GM12878 (cell line): ENCODE measurements at regions of chr18 and their contacts with region 1.

Region 1: DNA sequence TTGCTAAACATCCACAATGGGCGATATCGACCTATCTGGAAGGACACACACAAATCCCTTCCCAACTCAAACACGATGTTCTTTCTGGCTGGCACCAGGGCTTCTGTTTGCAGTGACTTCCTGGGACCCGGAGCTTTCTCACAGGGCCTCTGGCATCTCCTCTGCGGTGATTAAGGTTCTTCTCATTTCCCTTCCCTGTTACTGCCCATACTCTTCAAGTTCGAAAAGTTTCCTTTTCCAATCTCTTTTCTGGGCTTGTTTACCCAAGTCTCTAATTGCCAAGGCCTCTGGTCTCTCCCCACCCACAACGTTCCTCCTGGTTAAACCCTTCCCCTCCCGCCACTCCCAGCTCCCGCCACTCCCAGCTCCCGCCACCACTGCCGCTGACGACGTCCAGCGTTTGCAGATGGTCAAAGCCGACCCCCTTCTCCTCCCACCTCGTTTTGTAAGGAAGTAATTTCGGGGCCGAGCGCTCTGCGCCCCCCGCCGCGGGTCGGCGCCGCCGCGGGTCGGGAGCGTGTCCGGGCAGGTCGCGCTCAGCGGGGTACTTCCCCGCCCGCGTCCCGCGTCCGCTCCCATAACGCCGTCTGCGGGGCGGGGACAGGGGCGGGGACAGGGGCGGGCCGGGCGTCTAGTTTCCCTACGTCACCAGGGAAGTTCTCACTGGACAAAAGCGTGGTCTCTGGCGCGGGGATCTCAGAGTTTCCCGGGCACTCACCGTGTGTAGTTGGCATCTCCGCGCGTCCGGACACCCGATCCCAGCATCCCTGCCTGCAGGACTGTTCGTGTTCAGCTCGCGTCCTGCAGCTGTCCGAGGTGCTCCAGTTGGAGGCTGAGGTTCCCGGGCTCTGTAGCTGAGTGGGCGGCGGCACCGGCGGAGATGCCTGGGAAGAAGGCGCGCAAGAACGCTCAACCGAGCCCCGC is at the start of gene PMAIP1:
- DNase-seq: no peak
- ATAC-seq: peak; percentile 73
- H3K4me3 ChIP-seq: peak within 1 kb of the TSS; percentile 84
- H3K27ac ChIP-seq: peak within 1 kb of the TSS; percentile 95
- H3K4me1 ChIP-seq: no peaks in the 10 kb centered on the region; the same call in 1 of the 2 replicates
- H3K27me3 ChIP-seq: no peaks in the 10 kb centered on the region
- CTCF ChIP-seq: no peak
- EP300 ChIP-seq: 0 out of 4 replicates have a peak, but pooled peaks of 1 of the 2 experiments have one; percentile 2
- POLR2A ChIP-seq: peak; percentile 100
- RAD21 ChIP-seq: peak; percentile 6; the same call in 1 of the 2 replicates
- polyA plus RNA-seq, gene PMAIP1: 74.0 to 119 TPM

Region 2: GRCh38 chr18:58671111-58671631 is 1228.4 kb before region 1 on chr18 and contains the start of gene MALT1:
- CTCF ChIA-PET with region 1: no interaction called
- POLR2A ChIA-PET with region 1: no interaction called
- RAD21 ChIA-PET with region 1: no interaction called
- SMC1A ChIA-PET with region 1: no interaction called
- in situ Hi-C with region 1: loop called (anchors 25 kb)
- intact Hi-C with region 1: no loop called
- DNase-seq: peak; percentile 75
- ATAC-seq: peak; percentile 78
- H3K4me3 ChIP-seq: peak within 1 kb of the TSS; percentile 95
- H3K27ac ChIP-seq: peak within 1 kb of the TSS; percentile 93
- H3K4me1 ChIP-seq: peaks cover 16% of the 10 kb centered on the region; the same call in 1 of the 2 replicates
- H3K27me3 ChIP-seq: no peaks in the 10 kb centered on the region
- CTCF ChIP-seq: no peak
- EP300 ChIP-seq: peak in 1 of 2 experiments; percentile 17; a peak in 1 of 4 replicates
- POLR2A ChIP-seq: peak; percentile 96
- RAD21 ChIP-seq: no peak; the same call in 1 of the 2 replicates
- polyA plus RNA-seq, gene MALT1: 17.6 to 32.5 TPM

Region 3: GRCh38 chr18:59846814-59847490 is 52.6 kb before region 1 on chr18:
- CTCF ChIA-PET with region 1: interaction called, 13 read pairs
- POLR2A ChIA-PET with region 1: interaction called, 24 read pairs
- RAD21 ChIA-PET with region 1: interaction called, 85 read pairs
- SMC1A ChIA-PET with region 1: interaction called, 37 read pairs
- in situ Hi-C with region 1: loop called (anchors 10 kb)
- intact Hi-C with region 1: loop called (anchors 2 kb)
- DNase-seq: peak; percentile 83
- ATAC-seq: peak; percentile 93
- H3K4me3 ChIP-seq: peak overlapping the region; percentile 8; the same call in 1 of the 2 replicates
- H3K27ac ChIP-seq: peak overlapping the region; percentile 82
- H3K4me1 ChIP-seq: peaks cover 24% of the 10 kb centered on the region
- H3K27me3 ChIP-seq: no peaks in the 10 kb centered on the region
- CTCF ChIP-seq: no peak
- EP300 ChIP-seq: peak in 1 of 2 experiments; percentile 37; a peak in 1 of 4 replicates
- POLR2A ChIP-seq: no peak
- RAD21 ChIP-seq: peak; percentile 26; the same call in 1 of the 2 replicates

Region 4: GRCh38 chr18:59918320-59918755 is 18.8 kb after region 1 on chr18:
- CTCF ChIA-PET with region 1: interaction called, 47 read pairs
- POLR2A ChIA-PET with region 1: interaction called, 67 read pairs
- RAD21 ChIA-PET with region 1: interaction called, 187 read pairs
- SMC1A ChIA-PET with region 1: interaction called, 289 read pairs
- in situ Hi-C with region 1: no loop called
- intact Hi-C with region 1: loop called (anchors 2 kb)
- DNase-seq: peak; percentile 80
- ATAC-seq: peak; percentile 82
- H3K4me3 ChIP-seq: peak overlapping the region; percentile 5; the same call in 1 of the 2 replicates
- H3K27ac ChIP-seq: peak overlapping the region; percentile 74
- H3K4me1 ChIP-seq: peaks cover 47% of the 10 kb centered on the region
- H3K27me3 ChIP-seq: no peaks in the 10 kb centered on the region
- CTCF ChIP-seq: no peak
- EP300 ChIP-seq: peak in 1 of 2 experiments; percentile 27; a peak in 1 of 4 replicates
- POLR2A ChIP-seq: peak; percentile 44; the same call in 1 of the 2 replicates
- RAD21 ChIP-seq: no peak

Region 5: GRCh38 chr18:59957971-59958595 is 58.5 kb after region 1 on chr18:
- CTCF ChIA-PET with region 1: interaction called, 12 read pairs
- POLR2A ChIA-PET with region 1: interaction called, 25 read pairs
- RAD21 ChIA-PET with region 1: interaction called, 55 read pairs
- SMC1A ChIA-PET with region 1: interaction called, 68 read pairs
- in situ Hi-C with region 1: no loop called
- intact Hi-C with region 1: loop called (anchors 2 kb)
- DNase-seq: no peak
- ATAC-seq: peak; percentile 43
- H3K4me3 ChIP-seq: no peak overlapping the region
- H3K27ac ChIP-seq: peak overlapping the region; percentile 10; the same call in 1 of the 2 replicates
- H3K4me1 ChIP-seq: peaks cover 50% of the 10 kb centered on the region
- H3K27me3 ChIP-seq: no peaks in the 10 kb centered on the region
- CTCF ChIP-seq: no peak
- EP300 ChIP-seq: no peak
- POLR2A ChIP-seq: no peak
- RAD21 ChIP-seq: no peak